ENCODE measurements at regions of chr6 and their contacts with region 1.

Region 1: GRCh38 chr6:109491207-109491938 is 8.4 kb upstream of the ZBTB24 start:
- DNase-seq: peak in 6 of 9 donors; percentile 23 to 57 (median 39)
- ATAC-seq: peak; percentile 92
- H3K4me3 ChIP-seq: no peak overlapping the region
- H3K4me3 Mint-ChIP-seq: peak overlapping the region in 8 of 10 donors; percentile 4 to 70 (median 42)
- H3K27ac ChIP-seq: peak overlapping the region; percentile 1
- H3K27ac Mint-ChIP-seq: peak overlapping the region; percentile 19 to 84 (median 60)
- H3K4me1 ChIP-seq: peaks cover 15 to 17% of the 10 kb centered on the region in 2 donors
- H3K4me1 Mint-ChIP-seq: peaks cover 12 to 36% (median 25%) of the 10 kb centered on the region in 7 donors
- H3K27me3 ChIP-seq: no peaks in the 10 kb centered on the region
- H3K27me3 Mint-ChIP-seq: peaks cover 0 to 5% (median 0%) of the 10 kb centered on the region in 5 donors

Region 2: DNA sequence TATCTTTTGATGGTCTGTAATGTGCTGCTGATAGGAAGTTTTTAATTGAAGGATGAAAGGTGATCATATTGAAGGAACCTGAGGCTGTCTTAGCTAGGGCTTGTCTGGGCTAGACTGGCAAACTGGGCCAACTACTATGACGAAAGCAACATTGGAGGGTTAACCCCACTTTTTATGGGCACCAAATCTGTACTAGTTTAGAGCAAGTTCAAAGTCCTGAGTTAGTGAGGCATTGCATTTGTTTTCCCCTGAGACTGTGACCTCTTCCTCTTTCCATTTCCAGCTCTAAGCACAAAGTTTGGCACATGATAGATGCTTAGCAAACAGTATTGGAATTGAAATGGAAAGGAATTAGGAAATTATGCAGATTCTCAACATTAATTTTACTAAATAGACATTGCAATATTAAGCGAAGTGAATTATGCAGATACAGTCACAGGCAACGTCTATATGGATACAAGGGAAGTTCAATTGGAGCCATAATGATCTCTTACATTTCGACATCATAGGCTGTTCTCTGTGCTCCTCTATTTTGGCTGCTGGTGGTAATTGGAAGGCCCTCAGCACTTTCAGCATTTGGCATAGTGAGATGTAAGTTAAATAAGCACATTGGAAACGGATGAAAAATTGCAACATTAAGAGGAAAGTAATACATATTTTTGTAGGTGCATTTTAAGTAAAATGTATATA is 373.9 kb before region 1 on chr6:
- CTCF ChIA-PET with region 1: no interaction called
- POLR2A ChIA-PET with region 1: no interaction called
- intact Hi-C with region 1: no loop called
- DNase-seq: no peak
- ATAC-seq: no peak
- H3K4me3 ChIP-seq: no peak overlapping the region
- H3K4me3 Mint-ChIP-seq: no peak overlapping the region
- H3K27ac ChIP-seq: no peak overlapping the region
- H3K27ac Mint-ChIP-seq: no peak overlapping the region
- H3K4me1 ChIP-seq: no peaks in the 10 kb centered on the region
- H3K4me1 Mint-ChIP-seq: peaks cover 11 to 26% (median 21%) of the 10 kb centered on the region in 7 donors
- H3K27me3 ChIP-seq: no peaks in the 10 kb centered on the region
- H3K27me3 Mint-ChIP-seq: peaks cover 0 to 2% (median 0%) of the 10 kb centered on the region in 5 donors

Region 3: GRCh38 chr6:109515781-109516409 is 24.5 kb after region 1 on chr6:
- CTCF ChIA-PET with region 1: interaction called, 4 read pairs
- POLR2A ChIA-PET with region 1: interaction called, 3 read pairs
- intact Hi-C with region 1: loop called in 1 of 2 experiments (anchors 1 kb)
- DNase-seq: peak in 3 of 9 donors; percentile 11 to 26 (median 13)
- ATAC-seq: no peak
- H3K4me3 ChIP-seq: peak overlapping the region; percentile 61
- H3K4me3 Mint-ChIP-seq: peak overlapping the region; percentile 61 to 86 (median 72)
- H3K27ac ChIP-seq: peak overlapping the region; percentile 33
- H3K27ac Mint-ChIP-seq: peak overlapping the region; percentile 23 to 81 (median 55)
- H3K4me1 ChIP-seq: peaks cover 15 to 19% of the 10 kb centered on the region in 2 donors
- H3K4me1 Mint-ChIP-seq: peaks cover 14 to 36% (median 28%) of the 10 kb centered on the region in 7 donors
- H3K27me3 ChIP-seq: no peaks in the 10 kb centered on the region
- H3K27me3 Mint-ChIP-seq: peaks cover 0 to 1% (median 0%) of the 10 kb centered on the region in 5 donors

Region 4: DNA sequence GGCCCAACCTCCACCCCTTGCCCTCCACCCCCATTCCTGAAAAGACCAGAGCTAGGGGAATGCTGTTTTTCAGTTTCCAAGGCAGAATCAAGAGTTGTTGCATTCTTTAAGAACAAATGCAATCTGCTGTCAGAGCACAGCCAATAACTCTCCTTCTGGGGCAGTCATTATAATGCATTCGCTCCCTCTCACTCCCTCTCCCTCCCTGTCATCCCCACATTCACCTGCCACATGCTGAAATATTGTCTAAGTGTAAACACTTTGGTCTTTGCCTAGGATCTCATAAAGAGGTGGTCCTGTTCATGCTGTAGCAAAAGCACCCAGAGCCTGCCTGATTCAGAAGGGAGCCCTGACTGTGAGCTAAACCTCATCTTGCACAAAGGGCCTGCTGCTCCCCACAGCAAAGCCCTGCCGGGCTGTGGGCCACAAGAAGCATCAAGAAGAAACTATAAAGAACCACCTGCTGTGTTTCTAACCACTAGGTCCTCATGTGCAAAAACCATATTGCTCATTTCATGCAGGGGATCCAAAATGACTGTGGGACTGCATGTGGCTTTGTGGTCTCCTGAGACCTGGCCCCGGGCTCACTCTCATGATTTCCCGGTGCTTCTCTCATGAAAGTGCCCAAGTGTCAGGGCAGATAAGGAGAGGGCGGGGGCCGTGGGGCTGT is 572.4 kb after region 1 on chr6:
- CTCF ChIA-PET with region 1: no interaction called
- POLR2A ChIA-PET with region 1: no interaction called
- intact Hi-C with region 1: no loop called
- DNase-seq: no peak
- ATAC-seq: no peak
- H3K4me3 ChIP-seq: no peak overlapping the region
- H3K4me3 Mint-ChIP-seq: no peak overlapping the region
- H3K27ac ChIP-seq: no peak overlapping the region
- H3K27ac Mint-ChIP-seq: peak overlapping the region in 1 of 9 donors; percentile 60
- H3K4me1 ChIP-seq: no peaks in the 10 kb centered on the region
- H3K4me1 Mint-ChIP-seq: peaks cover 0 to 3% (median 0%) of the 10 kb centered on the region in 7 donors
- H3K27me3 ChIP-seq: peaks cover 0 to 5% of the 10 kb centered on the region in 2 donors
- H3K27me3 Mint-ChIP-seq: peaks cover 16 to 53% (median 41%) of the 10 kb centered on the region in 5 donors

Measured in naive thymus-derived CD4-positive, alpha-beta T cell (primary cell).